ENCODE measurements at regions of chr5 and their contacts with region 1.

Region 1: DNA sequence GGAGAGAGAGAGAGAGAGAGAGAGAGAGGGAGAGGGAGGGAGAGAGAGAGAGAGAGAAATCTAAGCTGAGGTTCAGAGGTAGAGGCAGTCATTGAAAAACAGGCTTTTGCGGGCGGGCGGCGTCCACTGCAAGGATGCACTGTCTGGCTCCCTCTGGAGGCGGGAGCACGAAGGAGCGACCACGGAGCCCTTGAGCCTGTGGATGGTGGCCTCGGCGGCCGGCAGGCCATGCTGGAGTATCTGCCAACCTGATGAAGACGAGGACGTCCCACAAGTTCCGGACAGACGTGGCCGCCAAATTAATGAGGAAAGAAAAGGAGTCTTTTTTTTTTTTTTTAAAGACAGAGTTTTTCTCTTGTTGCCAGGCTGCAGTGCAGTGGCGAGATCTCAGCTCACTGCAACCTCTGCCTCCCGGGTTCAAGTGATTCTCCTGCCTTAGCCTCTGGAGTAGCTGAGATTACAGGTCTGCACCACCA is 2.2 kb upstream of the CCDC125 start:
- DNase-seq: peak; percentile 90 to 95
- ATAC-seq: peak; percentile 91
- H3K4me3 ChIP-seq: no peak overlapping the region
- H3K27ac ChIP-seq: no peak overlapping the region
- H3K4me1 ChIP-seq: no peaks in the 10 kb centered on the region
- H3K27me3 ChIP-seq: no peaks in the 10 kb centered on the region

Region 2: GRCh38 chr5:69048230-69048629 is 286.6 kb before region 1 on chr5:
- intact Hi-C with region 1: loop called in 1 of 2 experiments (anchors 5 kb)
- DNase-seq: no peak
- ATAC-seq: no peak
- H3K4me3 ChIP-seq: no peak overlapping the region
- H3K27ac ChIP-seq: no peak overlapping the region
- H3K4me1 ChIP-seq: no peaks in the 10 kb centered on the region
- H3K27me3 ChIP-seq: no peaks in the 10 kb centered on the region

Region 3: DNA sequence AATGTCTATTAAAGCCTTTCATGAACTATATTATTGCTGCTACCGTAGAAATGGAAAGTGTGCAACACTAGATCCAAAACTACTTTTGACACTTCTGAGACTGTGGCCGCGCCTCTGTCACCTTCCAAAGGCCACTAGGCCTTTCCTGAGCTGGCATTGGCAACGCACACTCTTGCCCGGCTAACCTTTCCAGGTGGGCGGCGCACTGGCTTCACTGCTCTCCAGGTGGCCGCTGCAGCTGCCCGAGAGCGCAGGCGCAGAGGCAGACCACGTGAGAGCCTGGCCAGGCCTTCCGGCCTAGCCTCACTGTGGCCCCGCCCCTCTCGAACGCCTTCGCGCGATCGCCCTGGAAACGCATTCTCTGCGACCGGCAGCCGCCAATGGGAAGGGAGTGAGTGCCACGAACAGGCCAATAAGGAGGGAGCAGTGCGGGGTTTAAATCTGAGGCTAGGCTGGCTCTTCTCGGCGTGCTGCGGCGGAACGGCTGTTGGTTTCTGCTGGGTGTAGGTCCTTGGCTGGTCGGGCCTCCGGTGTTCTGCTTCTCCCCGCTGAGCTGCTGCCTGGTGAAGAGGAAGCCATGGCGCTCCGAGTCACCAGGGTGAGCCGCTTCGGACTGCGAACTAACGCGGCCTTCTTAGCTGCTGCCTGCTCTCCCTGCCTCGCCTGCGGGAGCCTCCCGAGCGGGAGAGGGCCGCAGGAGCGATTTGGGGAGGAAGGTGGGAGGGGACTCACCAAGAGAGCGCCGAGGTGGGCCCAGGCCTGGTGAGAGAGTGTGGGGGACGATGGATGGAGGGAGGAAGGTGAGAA is 167.9 kb before region 1 on chr5 and contains the start of gene CCNB1:
- intact Hi-C with region 1: loop called in 1 of 2 experiments (anchors 10 kb)
- DNase-seq: peak; percentile 99
- ATAC-seq: peak; percentile 100
- H3K4me3 ChIP-seq: peak within 1 kb of the TSS; percentile 40 to 59
- H3K27ac ChIP-seq: no peak within 1 kb of the TSS
- H3K4me1 ChIP-seq: no peaks in the 10 kb centered on the region
- H3K27me3 ChIP-seq: no peaks in the 10 kb centered on the region
- total RNA-seq, gene CCNB1: 1.5 to 4.6 TPM

Region 4: DNA sequence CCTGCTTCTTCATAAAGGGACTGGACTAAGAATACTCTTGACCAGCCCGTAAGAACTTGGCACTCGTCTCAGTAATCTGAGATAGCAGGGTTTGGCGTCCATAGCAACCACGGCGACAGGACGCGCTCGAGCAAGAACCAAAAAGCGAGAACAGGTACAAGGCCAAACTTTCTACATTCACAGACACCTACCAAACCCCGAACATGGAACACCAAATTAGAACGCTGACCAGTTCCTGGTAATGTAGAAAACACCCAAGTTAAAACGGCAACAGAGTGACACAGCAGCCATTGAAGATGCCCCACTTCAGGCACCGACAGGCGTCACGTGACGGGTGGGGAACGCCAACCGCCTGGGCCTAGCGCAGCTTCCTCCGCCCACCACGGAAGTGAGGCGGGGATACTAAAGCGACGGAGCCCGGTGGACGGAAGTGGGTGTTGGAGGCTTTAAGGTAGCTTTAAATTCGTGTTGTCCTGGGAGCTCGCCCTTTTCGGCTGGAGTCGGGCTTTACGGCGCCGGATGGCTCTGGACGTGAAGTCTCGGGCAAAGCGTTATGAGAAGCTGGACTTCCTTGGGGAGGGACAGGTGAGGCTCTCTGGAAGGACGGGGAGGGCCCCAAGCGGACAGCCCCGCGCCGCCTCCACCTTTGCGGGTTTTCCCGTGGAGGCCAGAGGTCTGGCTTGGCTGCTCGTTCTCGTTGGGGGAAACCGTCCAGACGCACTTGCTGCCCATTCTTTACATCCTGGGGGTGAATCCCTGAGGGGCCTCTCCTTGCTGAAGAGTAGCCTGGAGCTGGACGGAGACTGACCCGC is 100.2 kb before region 1 on chr5 and contains the start of gene CDK7:
- intact Hi-C with region 1: loop called (anchors 10 kb)
- DNase-seq: peak; percentile 97 to 98
- ATAC-seq: peak; percentile 99
- H3K4me3 ChIP-seq: peak within 1 kb of the TSS; percentile 65 to 93
- H3K27ac ChIP-seq: peak within 1 kb of the TSS in 1 of 2 donors; percentile 25
- H3K4me1 ChIP-seq: peaks cover 0 to 5% of the 10 kb centered on the region in 2 donors
- H3K27me3 ChIP-seq: no peaks in the 10 kb centered on the region
- total RNA-seq, gene CDK7: 22.0 to 22.7 TPM

Region 5: DNA sequence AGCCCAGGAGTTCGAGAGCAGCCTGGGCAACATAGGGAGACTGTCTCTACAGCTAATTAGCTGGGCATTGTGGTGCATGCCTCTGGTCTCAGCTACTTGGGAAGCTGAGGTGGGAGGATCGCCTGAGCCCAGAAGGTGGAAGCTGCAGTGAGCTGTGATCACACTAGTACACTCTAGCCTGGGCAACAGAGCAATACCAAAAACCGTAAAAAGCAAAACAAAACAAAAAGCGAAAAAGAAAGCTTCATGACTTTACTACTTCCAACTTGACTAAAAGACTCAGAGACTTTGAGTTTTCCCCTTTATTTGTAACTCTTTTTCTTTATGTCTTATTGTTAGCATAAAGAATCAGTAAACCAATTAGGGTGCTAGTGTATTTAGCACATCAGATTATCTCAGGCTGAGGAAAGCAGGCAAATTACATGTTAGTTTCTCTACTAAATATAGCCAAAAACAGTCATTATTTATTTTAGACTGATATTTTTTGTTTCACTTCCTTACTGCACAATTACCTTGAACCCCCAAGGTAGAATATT is 40.1 kb after region 1 on chr5:
- intact Hi-C with region 1: no loop called
- DNase-seq: no peak
- ATAC-seq: no peak
- H3K4me3 ChIP-seq: no peak overlapping the region
- H3K27ac ChIP-seq: no peak overlapping the region
- H3K4me1 ChIP-seq: no peaks in the 10 kb centered on the region
- H3K27me3 ChIP-seq: no peaks in the 10 kb centered on the region

Measured in aorta (tissue), 5 donors.